ENCODE measurements at regions of chr3 and their contacts with region 1.

Region 1: DNA sequence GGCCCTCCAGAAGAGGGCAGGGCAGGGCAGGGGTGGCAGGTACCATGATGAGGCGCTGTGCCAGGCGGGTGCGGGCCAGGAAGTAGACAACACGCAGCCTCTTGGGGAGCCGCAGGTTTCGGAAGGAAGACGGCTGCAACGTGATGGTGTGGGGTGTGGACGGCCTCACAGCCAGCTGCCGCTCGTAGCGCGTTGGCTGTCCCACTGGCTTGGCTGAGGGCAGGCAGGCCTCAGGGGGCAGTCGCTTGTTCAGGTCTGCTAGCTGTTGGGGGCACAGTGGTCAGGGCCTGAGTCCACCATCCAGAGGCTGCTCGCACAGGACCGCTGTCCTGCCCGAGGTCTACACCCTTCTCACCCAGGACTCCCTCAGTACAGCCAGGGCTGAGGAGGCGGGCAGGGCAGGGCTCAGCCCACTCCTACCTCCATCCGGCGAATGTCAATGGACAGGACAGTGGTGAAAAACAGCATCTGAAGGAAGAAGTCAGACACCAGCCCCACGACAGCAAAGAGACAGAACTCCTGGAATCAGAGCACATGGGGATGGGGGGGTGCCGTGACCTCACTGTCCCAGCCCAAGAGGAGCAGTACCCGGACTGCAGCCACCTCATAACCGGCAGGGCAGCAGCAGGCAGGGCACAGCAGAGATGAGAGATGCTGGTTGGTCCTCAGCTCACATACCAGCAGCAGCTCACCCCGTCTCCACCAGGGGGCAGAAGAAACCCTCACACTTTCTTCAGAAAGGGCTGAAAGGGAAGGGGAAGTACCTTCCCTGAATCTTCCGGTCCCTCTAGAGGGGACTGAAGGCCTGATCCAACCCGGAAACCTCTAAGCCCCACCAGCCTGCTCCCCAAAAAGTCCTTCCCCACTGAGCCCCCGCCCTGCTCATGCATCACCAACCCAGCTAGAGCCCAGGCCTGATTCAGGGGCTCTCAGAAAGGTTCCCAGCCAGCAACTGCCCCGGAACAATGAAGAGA is 40.0 kb downstream of the PTPN23 start:
- DNase-seq: peak; percentile 80 to 95
- ATAC-seq: peak; percentile 94 to 99 (median 96)
- H3K4me3 ChIP-seq: no peak overlapping the region
- H3K4me3 Mint-ChIP-seq: peak overlapping the region; percentile 47
- H3K27ac ChIP-seq: peak overlapping the region; percentile 49
- H3K27ac Mint-ChIP-seq: peak overlapping the region; percentile 86 to 91
- H3K4me1 ChIP-seq: peaks cover 24% of the 10 kb centered on the region
- H3K4me1 Mint-ChIP-seq: peaks cover 14 to 30% of the 10 kb centered on the region in 2 donors
- H3K27me3 ChIP-seq: no peaks in the 10 kb centered on the region
- H3K27me3 Mint-ChIP-seq: no peaks in the 10 kb centered on the region
- CTCF ChIP-seq: peak; percentile 85

Region 2: DNA sequence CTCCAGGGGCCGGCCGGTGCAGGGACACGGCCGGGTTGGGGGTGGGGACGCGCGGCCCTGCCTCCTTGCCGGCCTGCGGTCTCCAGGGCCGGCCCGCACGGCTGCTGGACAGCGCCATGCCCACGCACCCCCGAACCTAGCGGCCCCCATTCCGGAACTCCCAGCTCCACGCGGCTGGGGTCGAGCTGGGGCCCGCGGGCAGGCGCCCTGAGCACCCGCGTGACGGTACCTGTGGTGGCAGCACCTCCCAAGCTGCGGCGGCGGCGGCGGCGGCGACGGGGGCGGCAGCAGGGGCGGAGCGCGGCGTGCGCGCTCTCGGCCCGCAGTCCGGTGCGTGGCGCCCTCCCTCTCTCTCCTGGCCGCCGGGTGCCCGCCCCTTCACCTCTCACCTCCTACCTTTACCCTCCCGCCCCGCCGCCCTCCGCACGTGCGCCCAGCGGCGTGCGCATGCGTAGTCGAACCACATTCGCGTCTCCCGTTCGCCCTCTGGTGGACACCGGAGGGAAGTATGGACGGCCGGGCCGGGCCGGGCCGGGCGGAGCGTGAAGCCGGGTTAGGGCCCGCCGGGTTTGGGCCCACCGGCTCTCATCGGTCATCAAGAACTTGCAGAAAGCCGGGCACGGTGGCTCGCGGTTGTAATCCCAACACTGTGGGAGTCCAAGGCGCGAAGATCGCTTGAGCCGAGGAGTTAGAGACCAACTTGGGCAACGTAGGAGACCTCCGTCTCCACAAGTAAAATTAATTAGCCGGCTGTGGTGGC is 55.0 kb after region 1 on chr3 and contains the start of gene SCAP:
- intact Hi-C with region 1: loop called (anchors 1 kb)
- DNase-seq: peak; percentile 95 to 98
- ATAC-seq: peak; percentile 92 to 96 (median 93)
- H3K4me3 ChIP-seq: peak within 1 kb of the TSS; percentile 83
- H3K4me3 Mint-ChIP-seq: peak within 1 kb of the TSS; percentile 94
- H3K27ac ChIP-seq: peak within 1 kb of the TSS; percentile 86
- H3K27ac Mint-ChIP-seq: peak within 1 kb of the TSS; percentile 90 to 95
- H3K4me1 ChIP-seq: peaks cover 24% of the 10 kb centered on the region
- H3K4me1 Mint-ChIP-seq: peaks cover 23 to 30% of the 10 kb centered on the region in 2 donors
- H3K27me3 ChIP-seq: no peaks in the 10 kb centered on the region
- H3K27me3 Mint-ChIP-seq: no peaks in the 10 kb centered on the region
- CTCF ChIP-seq: peak; percentile 95
- total RNA-seq, gene SCAP: 63.9 to 104 (median 82.7) TPM